Activated CD4-positive, alpha-beta T cell treated with anti-CD3 and anti-CD28 coated beads, Interleukin-2, amount 10 ng/mL, durations not matched to agents 7 days and 5 days (primary cell): ENCODE measurements at regions of chr1 and their contacts with region 1.

Region 1: GRCh38 chr1:92310185-92310597 is 11.3 kb downstream of the RPAP2 start:
- DNase-seq: no peak
- H3K4me3 Mint-ChIP-seq: no peak overlapping the region
- H3K27ac Mint-ChIP-seq: no peak overlapping the region
- H3K4me1 Mint-ChIP-seq: peaks cover 39% of the 10 kb centered on the region
- H3K27me3 Mint-ChIP-seq: no peaks in the 10 kb centered on the region

Region 2: DNA sequence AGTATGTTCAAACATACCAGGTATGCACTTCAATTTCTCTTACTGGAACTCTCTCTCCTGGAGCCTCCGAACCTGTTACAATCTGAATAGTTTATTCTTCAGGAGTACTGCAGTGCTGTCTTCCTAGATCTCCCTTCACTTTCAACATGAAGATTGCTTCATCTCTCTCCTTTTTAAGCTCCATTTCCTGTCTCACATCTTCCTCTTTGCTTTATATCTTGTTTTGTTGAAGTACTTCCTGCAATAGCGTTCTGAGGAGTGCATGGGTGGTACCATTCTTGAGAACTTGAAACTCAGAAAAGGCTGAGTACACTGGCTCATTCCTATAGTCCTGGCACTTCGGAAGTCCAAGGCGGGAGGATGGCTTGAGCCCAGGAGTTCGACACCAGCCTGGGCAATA is 108.2 kb before region 1 on chr1:
- CTCF ChIA-PET with region 1: no interaction called
- POLR2A ChIA-PET with region 1: no interaction called
- DNase-seq: peak; percentile 7
- H3K4me3 Mint-ChIP-seq: no peak overlapping the region
- H3K27ac Mint-ChIP-seq: peak overlapping the region; percentile 71
- H3K4me1 Mint-ChIP-seq: peaks cover 17% of the 10 kb centered on the region
- H3K27me3 Mint-ChIP-seq: no peaks in the 10 kb centered on the region

Region 3: DNA sequence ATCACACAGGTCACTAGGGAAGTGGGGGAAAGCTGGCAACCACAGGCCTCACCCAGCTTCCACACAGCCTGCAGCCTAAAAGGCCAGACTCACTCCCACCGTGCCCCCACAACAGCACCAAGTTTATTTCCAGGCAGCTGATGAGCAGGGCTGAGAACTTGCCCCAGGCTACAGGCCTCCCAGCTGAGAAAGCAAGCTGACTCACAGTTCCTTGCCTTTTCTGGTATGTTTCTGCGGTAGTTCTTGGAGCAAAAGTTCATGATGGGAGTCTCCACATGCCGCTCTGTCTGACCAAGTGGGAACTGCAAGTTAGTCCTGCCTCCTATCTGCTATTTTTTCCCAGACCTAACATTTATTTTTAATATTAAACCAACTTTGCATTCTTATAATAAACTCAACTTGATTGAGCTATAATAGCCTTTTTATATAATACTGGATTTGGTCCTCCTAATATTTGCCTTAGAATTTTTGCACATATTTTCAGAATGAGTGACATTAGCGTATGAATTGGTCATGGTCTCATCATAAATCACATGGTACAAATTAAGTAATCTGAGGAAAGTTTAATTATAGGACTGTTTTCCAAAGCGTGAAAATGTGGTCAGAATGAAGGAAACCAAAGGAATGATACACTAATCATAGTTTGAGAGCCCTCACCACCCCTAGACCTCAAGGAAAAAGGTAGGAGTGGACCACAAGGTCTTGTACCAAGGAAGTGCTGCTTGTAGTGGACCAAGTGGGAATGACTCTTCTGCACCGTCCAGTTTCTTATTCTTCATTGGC is 19.3 kb after region 1 on chr1:
- CTCF ChIA-PET with region 1: interaction called, 11 read pairs
- POLR2A ChIA-PET with region 1: no interaction called
- DNase-seq: no peak
- H3K4me3 Mint-ChIP-seq: no peak overlapping the region
- H3K27ac Mint-ChIP-seq: no peak overlapping the region
- H3K4me1 Mint-ChIP-seq: peaks cover 20% of the 10 kb centered on the region
- H3K27me3 Mint-ChIP-seq: no peaks in the 10 kb centered on the region